Activated B cell treated with CpG ODN at 0.5 μM for 24 hours (primary cell): ENCODE measurements at regions of chr1 and their contacts with region 1.

Region 1: GRCh38 chr1:113042285-113043143 is 30.5 kb upstream of the LRIG2 start:
- DNase-seq: peak; percentile 20
- ATAC-seq: peak; percentile 77
- H3K4me3 Mint-ChIP-seq: peak overlapping the region; percentile 46
- H3K27ac Mint-ChIP-seq: peak overlapping the region; percentile 30
- H3K4me1 Mint-ChIP-seq: peaks cover 27% of the 10 kb centered on the region
- H3K27me3 Mint-ChIP-seq: peaks cover 6% of the 10 kb centered on the region
- CTCF ChIP-seq: no peak

Region 2: DNA sequence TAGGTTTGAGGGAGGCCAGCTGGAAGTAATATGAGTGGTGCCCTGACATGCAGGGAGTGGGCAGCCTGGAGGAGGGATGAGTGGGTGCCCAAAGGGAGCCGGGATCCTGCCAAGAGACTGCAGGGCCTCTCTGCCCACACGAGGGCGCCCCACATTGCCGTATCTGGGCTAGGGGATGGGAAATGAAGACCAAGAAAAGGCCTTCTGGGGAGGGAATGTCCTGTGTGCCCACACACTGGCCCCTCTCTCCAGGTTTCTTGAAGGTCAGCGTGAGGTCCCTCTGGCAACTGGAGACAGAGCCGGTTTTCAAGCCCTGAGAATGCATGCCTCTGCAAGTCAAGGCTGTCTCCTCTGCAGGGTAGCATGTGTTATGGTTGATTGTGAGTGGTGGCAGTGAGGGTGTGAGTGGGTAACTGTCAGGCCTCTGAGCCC is 233.2 kb before region 1 on chr1:
- CTCF ChIA-PET with region 1: interaction called, 3 read pairs
- POLR2A ChIA-PET with region 1: no interaction called
- intact Hi-C with region 1: loop called (anchors 1 kb)
- DNase-seq: peak; percentile 53
- ATAC-seq: peak; percentile 75
- H3K4me3 Mint-ChIP-seq: no peak overlapping the region
- H3K27ac Mint-ChIP-seq: no peak overlapping the region
- H3K4me1 Mint-ChIP-seq: no peaks in the 10 kb centered on the region
- H3K27me3 Mint-ChIP-seq: peaks cover 2% of the 10 kb centered on the region
- CTCF ChIP-seq: peak; percentile 15

Region 3: DNA sequence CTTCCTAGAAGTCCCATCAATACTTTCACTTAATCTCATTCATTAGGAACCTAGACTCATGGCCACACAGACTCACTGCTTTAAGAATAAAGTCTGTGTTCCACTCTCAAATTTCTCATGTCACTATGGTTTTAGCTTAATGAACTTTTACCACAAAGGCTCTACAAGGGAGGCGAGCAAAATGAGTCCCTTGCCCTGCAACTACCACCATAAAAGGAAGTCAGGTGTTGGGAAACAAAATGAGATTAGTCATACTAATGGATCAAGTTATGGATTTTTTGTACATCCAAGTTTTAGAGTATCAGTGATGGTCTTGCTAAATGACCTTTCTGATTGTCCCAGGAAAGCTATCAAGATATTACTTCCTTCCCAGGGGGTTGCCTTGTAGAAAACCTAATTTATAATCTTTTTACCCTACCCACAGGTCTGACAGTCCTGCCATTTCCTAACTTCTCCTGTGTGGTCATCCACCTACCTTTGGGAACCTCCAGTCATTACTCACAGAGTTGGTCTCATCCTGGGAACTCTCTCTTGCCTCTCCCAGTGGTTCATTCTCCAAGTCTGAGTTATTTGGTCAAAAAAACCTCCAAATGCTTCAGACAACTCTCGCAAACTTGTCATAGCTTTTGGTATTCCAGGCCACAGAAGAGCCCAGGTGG is 34.7 kb before region 1 on chr1:
- CTCF ChIA-PET with region 1: no interaction called
- POLR2A ChIA-PET with region 1: no interaction called
- intact Hi-C with region 1: loop called (anchors 5 kb)
- DNase-seq: no peak
- ATAC-seq: no peak
- H3K4me3 Mint-ChIP-seq: no peak overlapping the region
- H3K27ac Mint-ChIP-seq: no peak overlapping the region
- H3K4me1 Mint-ChIP-seq: no peaks in the 10 kb centered on the region
- H3K27me3 Mint-ChIP-seq: no peaks in the 10 kb centered on the region
- CTCF ChIP-seq: no peak

Region 4: GRCh38 chr1:113207019-113207418 is 164.5 kb after region 1 on chr1:
- CTCF ChIA-PET with region 1: no interaction called
- POLR2A ChIA-PET with region 1: no interaction called
- intact Hi-C with region 1: no loop called
- DNase-seq: no peak
- ATAC-seq: no peak
- H3K4me3 Mint-ChIP-seq: no peak overlapping the region
- H3K27ac Mint-ChIP-seq: no peak overlapping the region
- H3K4me1 Mint-ChIP-seq: peaks cover 5% of the 10 kb centered on the region
- H3K27me3 Mint-ChIP-seq: peaks cover 25% of the 10 kb centered on the region
- CTCF ChIP-seq: no peak